Natural killer cell (primary cell): ENCODE measurements at regions of chr3 and their contacts with region 1.

Region 1: GRCh38 chr3:134299185-134299887 is 48.7 kb upstream of the RYK start:
- DNase-seq: peak in 1 of 2 donors; percentile 13
- ATAC-seq: no peak
- H3K4me3 ChIP-seq: no peak overlapping the region
- H3K4me3 Mint-ChIP-seq: no peak overlapping the region
- H3K27ac ChIP-seq: no peak overlapping the region
- H3K27ac Mint-ChIP-seq: no peak overlapping the region
- H3K4me1 ChIP-seq: peaks cover 6% of the 10 kb centered on the region
- H3K4me1 Mint-ChIP-seq: peaks cover 0 to 5% of the 10 kb centered on the region in 2 donors
- H3K27me3 ChIP-seq: peaks cover 7% of the 10 kb centered on the region
- H3K27me3 Mint-ChIP-seq: peaks cover 22 to 29% of the 10 kb centered on the region in 2 donors
- CTCF ChIP-seq: no peak

Region 2: DNA sequence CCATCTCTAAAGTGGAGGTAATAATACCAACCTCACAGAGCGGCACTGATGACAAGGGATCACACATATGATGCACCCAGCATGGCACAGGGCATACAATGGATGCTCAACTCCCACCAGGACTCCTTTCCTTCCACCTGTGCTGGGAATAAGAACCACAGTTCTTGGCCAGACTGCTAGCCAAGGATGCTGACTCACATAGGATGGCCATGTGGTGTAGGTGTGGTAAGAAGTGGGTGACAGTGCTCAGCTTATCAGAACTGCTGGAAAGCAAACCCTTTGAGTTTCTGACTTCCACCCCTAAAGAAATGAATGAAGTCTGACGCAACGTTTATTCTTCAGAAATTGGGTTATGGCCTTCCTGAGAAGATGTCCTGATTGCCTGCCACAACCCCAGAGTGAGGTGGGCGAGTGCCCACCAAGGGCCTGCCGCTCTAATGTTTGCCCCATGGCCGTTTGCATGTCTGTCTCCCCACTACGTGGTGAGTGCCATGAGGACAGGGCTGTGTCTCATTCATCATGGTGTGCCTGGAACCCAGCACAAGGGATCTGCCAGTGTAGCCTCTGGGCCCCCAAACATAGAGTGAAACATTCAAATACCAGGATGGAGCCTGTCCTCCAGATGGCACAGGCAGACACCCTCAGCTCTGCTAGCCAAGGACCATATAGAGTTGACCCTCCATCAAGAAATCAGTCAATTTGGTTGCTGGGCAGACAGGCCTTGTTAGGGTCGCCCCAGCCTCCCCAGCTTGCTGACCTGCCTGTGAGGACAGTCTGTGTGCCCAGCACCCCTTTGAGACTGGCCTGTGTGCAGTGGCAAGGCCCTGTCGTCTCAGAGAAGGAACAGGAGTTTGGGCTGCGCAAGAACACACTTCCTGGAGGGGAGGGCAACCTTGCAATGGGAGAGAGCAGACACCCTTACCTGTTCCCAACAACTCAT is 212.0 kb before region 1 on chr3:
- intact Hi-C with region 1: no loop called
- DNase-seq: no peak
- ATAC-seq: no peak
- H3K4me3 ChIP-seq: no peak overlapping the region
- H3K4me3 Mint-ChIP-seq: no peak overlapping the region
- H3K27ac ChIP-seq: no peak overlapping the region
- H3K27ac Mint-ChIP-seq: no peak overlapping the region
- H3K4me1 ChIP-seq: no peaks in the 10 kb centered on the region
- H3K4me1 Mint-ChIP-seq: no peaks in the 10 kb centered on the region
- H3K27me3 ChIP-seq: no peaks in the 10 kb centered on the region
- H3K27me3 Mint-ChIP-seq: peaks cover 0 to 4% of the 10 kb centered on the region in 2 donors
- CTCF ChIP-seq: no peak

Region 3: DNA sequence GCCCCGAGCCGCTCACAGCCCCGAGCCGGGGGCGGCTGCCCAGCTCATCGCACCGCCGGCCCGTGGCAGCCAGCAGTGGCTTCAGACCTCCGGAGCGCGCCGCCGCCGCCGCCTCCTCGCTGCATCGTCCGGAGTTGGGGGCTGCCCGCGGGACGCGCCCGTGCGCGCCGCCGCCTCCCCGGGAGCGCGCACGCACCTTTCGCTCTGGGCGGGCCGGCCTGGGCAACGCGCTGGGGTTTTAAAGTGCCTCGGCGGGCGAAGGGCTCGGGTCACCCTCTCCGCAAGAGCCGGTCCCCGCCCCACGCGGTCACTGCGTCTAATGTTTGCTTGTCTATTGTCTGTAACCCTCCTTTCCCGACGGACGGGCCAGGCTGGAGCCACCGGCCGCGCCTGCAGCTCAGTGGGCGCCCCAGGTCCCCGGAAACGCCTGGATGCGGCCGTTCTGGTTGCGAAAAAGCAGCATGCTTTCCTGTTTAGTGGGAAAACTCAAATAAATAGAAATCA is 48.6 kb before region 1 on chr3 and contains the start of gene RYK:
- intact Hi-C with region 1: loop called (anchors 5 kb)
- DNase-seq: peak; percentile 78 to 89
- ATAC-seq: peak; percentile 83 to 96 (median 87)
- H3K4me3 ChIP-seq: peak within 1 kb of the TSS; percentile 90
- H3K4me3 Mint-ChIP-seq: peak within 1 kb of the TSS; percentile 98
- H3K27ac ChIP-seq: peak within 1 kb of the TSS; percentile 84
- H3K27ac Mint-ChIP-seq: peak within 1 kb of the TSS; percentile 90 to 94
- H3K4me1 ChIP-seq: peaks cover 17% of the 10 kb centered on the region
- H3K4me1 Mint-ChIP-seq: peaks cover 34 to 36% of the 10 kb centered on the region in 2 donors
- H3K27me3 ChIP-seq: no peaks in the 10 kb centered on the region
- H3K27me3 Mint-ChIP-seq: peaks cover 9 to 15% of the 10 kb centered on the region in 2 donors
- CTCF ChIP-seq: no peak
- total RNA-seq, gene RYK: 56.7 to 69.5 (median 56.8) TPM

Region 4: GRCh38 chr3:134485718-134486576 is 186.6 kb after region 1 on chr3 and contains the starts of genes ANAPC13 and CEP63:
- intact Hi-C with region 1: loop called (anchors 5 kb)
- DNase-seq: peak; percentile 91 to 98
- ATAC-seq: peak; percentile 79 to 92 (median 84)
- H3K4me3 ChIP-seq: peak within 1 kb of the TSS; percentile 86
- H3K4me3 Mint-ChIP-seq: peak within 1 kb of the TSS; percentile 99
- H3K27ac ChIP-seq: peak within 1 kb of the TSS; percentile 95
- H3K27ac Mint-ChIP-seq: peak within 1 kb of the TSS; percentile 98 to 99
- H3K4me1 ChIP-seq: peaks cover 23% of the 10 kb centered on the region
- H3K4me1 Mint-ChIP-seq: peaks cover 41 to 53% of the 10 kb centered on the region in 2 donors
- H3K27me3 ChIP-seq: no peaks in the 10 kb centered on the region
- H3K27me3 Mint-ChIP-seq: no peaks in the 10 kb centered on the region
- CTCF ChIP-seq: no peak
- total RNA-seq, gene ANAPC13: 16.1 to 20.4 (median 16.6) TPM
- total RNA-seq, gene CEP63: 17.9 to 25.7 (median 19.5) TPM